ENCODE measurements at regions of chr2 and their contacts with region 1.

Region 1: GRCh38 chr2:3518496-3519254 is 656 bp downstream of the ADI1 start:
- DNase-seq: peak; percentile 82 to 96 (median 93)
- H3K4me3 ChIP-seq: peak overlapping the region; percentile 71 to 100 (median 92)
- H3K27ac ChIP-seq: peak overlapping the region; percentile 92 to 100 (median 99)
- H3K27me3 ChIP-seq: no peaks in the 10 kb centered on the region
- CTCF ChIP-seq: peak in 6 of 56 donors; percentile 6 to 43 (median 18)

Region 2: GRCh38 chr2:3379647-3380534 is 138.8 kb before region 1 on chr2 and contains the start of gene TRAPPC12:
- intact Hi-C with region 1: loop called in 1 of 2 experiments (anchors 1 kb)
- DNase-seq: peak; percentile 88 to 95 (median 92)
- H3K4me3 ChIP-seq: peak within 1 kb of the TSS; percentile 65 to 99 (median 94)
- H3K27ac ChIP-seq: peak within 1 kb of the TSS; percentile 27 to 99 (median 95)
- H3K27me3 ChIP-seq: no peaks in the 10 kb centered on the region
- CTCF ChIP-seq: peak in 53 of 56 donors; percentile 27 to 76 (median 58)
- total RNA-seq, gene TRAPPC12: 132 to 231 (median 178) TPM

Region 3: DNA sequence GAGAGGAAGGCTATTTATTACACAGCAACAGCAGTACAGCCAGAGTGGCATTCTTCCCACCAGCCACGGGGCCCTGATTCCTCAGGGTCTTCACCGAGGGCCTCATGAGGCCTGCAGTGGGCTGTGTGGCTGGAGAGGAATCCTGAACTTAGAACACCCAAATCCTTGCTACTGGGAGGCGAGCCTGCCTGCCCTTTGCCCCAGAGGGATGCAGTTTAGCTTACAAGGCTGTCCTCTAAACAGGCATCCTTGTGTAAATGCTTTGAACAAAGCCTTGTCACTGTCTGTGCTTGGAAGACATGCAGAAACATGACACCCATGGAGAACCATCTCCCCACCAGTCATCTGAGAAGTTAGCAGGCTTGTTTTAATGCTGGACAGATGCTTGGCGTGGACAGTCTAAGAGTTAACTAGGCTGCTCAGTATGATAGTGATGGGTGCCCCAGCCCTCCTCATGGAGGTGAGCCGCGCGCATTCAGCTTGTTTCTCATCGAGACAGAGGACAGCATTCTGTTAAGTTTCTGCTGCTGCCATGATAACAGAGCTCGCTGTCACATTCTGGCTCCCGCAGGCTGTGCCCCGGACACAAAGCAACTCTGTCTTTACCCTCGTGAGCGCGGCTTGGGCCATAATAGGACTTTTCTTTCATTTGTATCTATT is 42.2 kb before region 1 on chr2:
- intact Hi-C with region 1: loop called (anchors 2 to 5 kb)
- DNase-seq: peak in 9 of 10 donors; percentile 50 to 82 (median 69)
- H3K4me3 ChIP-seq: peak overlapping the region in 15 of 59 donors; percentile 1 to 42 (median 20)
- H3K27ac ChIP-seq: peak overlapping the region; percentile 83 to 100 (median 96)
- H3K27me3 ChIP-seq: no peaks in the 10 kb centered on the region
- CTCF ChIP-seq: peak in 1 of 56 donors; percentile 11

Measured in dorsolateral prefrontal cortex (tissue), 120 donors.